WTC11 (cell line): ENCODE measurements at regions of chr15 and their contacts with region 1.

Region 1: DNA sequence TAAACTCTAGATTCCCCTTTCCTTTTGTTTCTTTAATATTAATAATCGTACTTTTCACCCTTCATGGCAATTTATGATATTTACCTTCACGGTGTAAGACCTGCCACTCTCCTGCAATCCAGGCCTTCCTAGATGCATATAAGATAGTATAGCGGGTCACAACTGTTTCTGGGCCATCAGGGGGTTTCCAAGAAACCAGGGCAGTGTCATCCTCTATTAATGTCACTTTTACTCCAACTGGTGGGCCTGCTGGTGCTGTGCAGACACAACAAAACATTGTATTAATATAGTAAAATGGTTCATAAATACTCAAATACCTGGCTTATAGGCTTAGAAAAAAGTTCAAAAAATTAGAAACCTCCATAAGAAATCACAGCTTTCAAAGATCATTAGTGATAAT is 48.9 kb upstream of the PYGO1 start:
- DNase-seq: no peak
- ATAC-seq: no peak
- H3K4me3 Mint-ChIP-seq: no peak overlapping the region
- H3K27ac Mint-ChIP-seq: no peak overlapping the region
- H3K4me1 Mint-ChIP-seq: no peaks in the 10 kb centered on the region
- H3K27me3 Mint-ChIP-seq: no peaks in the 10 kb centered on the region; the same call in 1 of the 2 replicates
- CTCF ChIP-seq: no peak

Region 2: GRCh38 chr15:55475842-55476241 is 161.2 kb before region 1 on chr15:
- CTCF ChIA-PET with region 1: no interaction called
- POLR2A ChIA-PET with region 1: no interaction called
- DNase-seq: no peak
- ATAC-seq: no peak
- H3K4me3 Mint-ChIP-seq: no peak overlapping the region
- H3K27ac Mint-ChIP-seq: no peak overlapping the region
- H3K4me1 Mint-ChIP-seq: no peaks in the 10 kb centered on the region
- H3K27me3 Mint-ChIP-seq: no peaks in the 10 kb centered on the region
- CTCF ChIP-seq: no peak

Region 3: GRCh38 chr15:55526559-55527036 is 110.5 kb before region 1 on chr15:
- CTCF ChIA-PET with region 1: interaction called, 16 read pairs
- POLR2A ChIA-PET with region 1: no interaction called
- DNase-seq: no peak
- ATAC-seq: peak; percentile 90
- H3K4me3 Mint-ChIP-seq: no peak overlapping the region
- H3K27ac Mint-ChIP-seq: no peak overlapping the region
- H3K4me1 Mint-ChIP-seq: 0 out of 2 replicates have a peak, but pooled peaks cover 3% of the 10 kb centered on the region
- H3K27me3 Mint-ChIP-seq: peaks cover 24% of the 10 kb centered on the region
- CTCF ChIP-seq: peak; percentile 44

Region 4: GRCh38 chr15:55601374-55601773 is 35.7 kb before region 1 on chr15:
- CTCF ChIA-PET with region 1: no interaction called
- POLR2A ChIA-PET with region 1: no interaction called
- DNase-seq: no peak
- ATAC-seq: no peak
- H3K4me3 Mint-ChIP-seq: no peak overlapping the region
- H3K27ac Mint-ChIP-seq: no peak overlapping the region
- H3K4me1 Mint-ChIP-seq: no peaks in the 10 kb centered on the region
- H3K27me3 Mint-ChIP-seq: no peaks in the 10 kb centered on the region; the same call in 1 of the 2 replicates
- CTCF ChIP-seq: no peak

Region 5: GRCh38 chr15:55768727-55769126 is 131.6 kb after region 1 on chr15:
- CTCF ChIA-PET with region 1: no interaction called
- POLR2A ChIA-PET with region 1: no interaction called
- DNase-seq: no peak
- ATAC-seq: peak; percentile 36
- H3K4me3 Mint-ChIP-seq: no peak overlapping the region
- H3K27ac Mint-ChIP-seq: no peak overlapping the region
- H3K4me1 Mint-ChIP-seq: no peaks in the 10 kb centered on the region; the same call in 1 of the 2 replicates
- H3K27me3 Mint-ChIP-seq: no peaks in the 10 kb centered on the region
- CTCF ChIP-seq: no peak